ENCODE measurements at regions of chr18 and their contacts with region 1.

Region 1: GRCh38 chr18:58143386-58143785 is 99.4 kb downstream of the NEDD4L start:
- DNase-seq: no peak
- H3K4me3 ChIP-seq: no peak overlapping the region
- H3K27ac ChIP-seq: no peak overlapping the region
- H3K4me1 ChIP-seq: peaks cover 2 to 9% (median 7%) of the 10 kb centered on the region in 4 experiments; a peak in 5 of 7 replicates
- H3K27me3 ChIP-seq: no peaks in the 10 kb centered on the region
- CTCF ChIP-seq: no peak
- EP300 ChIP-seq: no peak
- POLR2A ChIP-seq: no peak
- RAD21 ChIP-seq: no peak

Region 2: DNA sequence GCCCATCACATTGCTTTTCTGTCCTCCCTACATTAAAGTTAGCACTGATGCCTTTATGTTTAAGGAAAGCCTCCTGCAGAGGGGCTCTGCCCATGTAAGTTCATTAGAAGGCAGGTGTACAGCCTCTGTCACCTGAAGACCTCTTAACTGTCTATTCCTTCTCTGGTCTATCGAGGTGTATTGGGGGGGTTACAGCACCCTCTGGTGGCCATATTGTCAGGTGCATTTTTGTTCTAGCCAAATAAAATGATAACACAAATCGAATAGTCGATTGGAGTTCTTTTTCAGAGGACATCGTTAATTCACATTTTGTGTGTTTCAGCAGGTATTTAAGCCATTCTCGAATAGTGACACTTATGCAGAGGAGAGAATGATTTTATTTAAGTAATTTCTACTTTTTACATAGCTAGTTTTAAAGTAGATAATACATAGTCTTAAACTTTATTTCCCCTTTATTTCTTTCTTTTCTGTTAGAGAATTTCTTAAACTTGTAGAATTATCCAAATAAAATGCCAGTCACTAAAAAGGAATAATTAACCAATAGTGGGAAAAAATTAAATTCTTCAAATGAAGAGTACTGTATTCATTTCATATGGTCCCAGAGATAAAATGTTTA is 37.5 kb after region 1 on chr18:
- CTCF ChIA-PET with region 1: interaction called, 25 read pairs
- POLR2A ChIA-PET with region 1: no interaction called
- DNase-seq: peak in 1 of 2 experiments; percentile 82
- H3K4me3 ChIP-seq: no peak overlapping the region
- H3K27ac ChIP-seq: no peak overlapping the region
- H3K4me1 ChIP-seq: peaks cover 0 to 17% (median 7%) of the 10 kb centered on the region in 4 experiments; a peak in 4 of 7 replicates
- H3K27me3 ChIP-seq: no peaks in the 10 kb centered on the region
- CTCF ChIP-seq: peak in 2 of 3 experiments; percentile 76 to 87; a peak in 3 of 4 replicates
- EP300 ChIP-seq: no peak
- POLR2A ChIP-seq: no peak
- RAD21 ChIP-seq: peak; percentile 74 to 83

Measured in H1 (cell line).